Activated CD4-positive, alpha-beta T cell treated with anti-CD3 and anti-CD28 coated beads for 36 hours (primary cell): ENCODE measurements at regions of chr5 and their contacts with region 1.

Region 1: GRCh38 chr5:176447982-176448608 is at the start of gene FAF2:
- DNase-seq: peak; percentile 98
- ATAC-seq: peak; percentile 98
- H3K4me3 Mint-ChIP-seq: peak within 1 kb of the TSS; percentile 90
- H3K27ac Mint-ChIP-seq: peak within 1 kb of the TSS; percentile 97
- H3K4me1 Mint-ChIP-seq: peaks cover 31% of the 10 kb centered on the region
- H3K27me3 Mint-ChIP-seq: no peaks in the 10 kb centered on the region
- total RNA-seq, gene FAF2: 37.6 to 44.8 TPM

Region 2: GRCh38 chr5:176361437-176362232 is 86.5 kb before region 1 on chr5 and contains the start of gene KIAA1191:
- CTCF ChIA-PET with region 1: interaction called, 3 read pairs
- POLR2A ChIA-PET with region 1: no interaction called
- intact Hi-C with region 1: loop called (anchors 1 kb)
- DNase-seq: peak; percentile 97
- ATAC-seq: peak; percentile 91
- H3K4me3 Mint-ChIP-seq: peak within 1 kb of the TSS; percentile 95
- H3K27ac Mint-ChIP-seq: peak within 1 kb of the TSS; percentile 94
- H3K4me1 Mint-ChIP-seq: peaks cover 32% of the 10 kb centered on the region
- H3K27me3 Mint-ChIP-seq: no peaks in the 10 kb centered on the region
- total RNA-seq, gene KIAA1191: 42.2 to 52.6 TPM

Region 3: DNA sequence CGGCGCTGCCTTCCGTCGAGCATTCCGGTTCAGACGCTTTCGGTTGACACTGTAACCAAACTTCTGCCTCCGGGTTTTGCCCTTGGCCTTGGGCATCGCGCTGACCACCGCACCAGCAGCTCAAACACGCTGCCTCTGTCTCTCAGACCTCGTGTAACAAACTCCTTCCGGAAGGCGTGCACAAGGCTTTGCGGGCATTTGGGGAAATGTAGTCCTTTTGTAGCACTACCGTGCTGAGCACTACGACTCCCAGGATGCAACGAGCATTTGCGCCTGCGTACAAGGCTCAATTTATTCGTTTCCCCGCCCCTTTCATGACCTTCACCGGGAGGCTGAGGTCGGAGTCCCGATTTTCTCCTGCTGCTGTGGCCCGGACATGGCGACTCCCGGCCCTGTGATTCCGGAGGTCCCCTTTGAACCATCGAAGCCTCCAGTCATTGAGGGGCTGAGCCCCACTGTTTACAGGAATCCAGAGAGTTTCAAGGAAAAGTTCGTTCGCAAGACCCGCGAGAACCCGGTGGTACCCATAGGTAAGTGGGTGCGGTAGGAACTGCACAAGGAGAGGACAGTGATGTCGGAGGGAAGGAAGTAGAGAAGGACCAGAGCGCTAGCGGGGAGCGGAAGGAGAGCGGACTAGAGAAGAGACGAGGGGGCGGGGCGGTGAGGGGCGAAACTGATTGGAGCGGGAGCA is 59.5 kb before region 1 on chr5 and contains the starts of genes HIGD2A and NOP16:
- CTCF ChIA-PET with region 1: interaction called, 3 read pairs
- POLR2A ChIA-PET with region 1: interaction called, 3 read pairs
- intact Hi-C with region 1: loop called (anchors 1 kb)
- DNase-seq: peak; percentile 100
- ATAC-seq: peak; percentile 93
- H3K4me3 Mint-ChIP-seq: peak within 1 kb of the TSS; percentile 95
- H3K27ac Mint-ChIP-seq: peak within 1 kb of the TSS; percentile 100
- H3K4me1 Mint-ChIP-seq: peaks cover 31% of the 10 kb centered on the region
- H3K27me3 Mint-ChIP-seq: no peaks in the 10 kb centered on the region
- total RNA-seq, gene HIGD2A: 104 to 140 TPM
- total RNA-seq, gene NOP16: 54.3 to 65.4 TPM

Region 4: GRCh38 chr5:176596689-176597416 is 148.8 kb after region 1 on chr5:
- CTCF ChIA-PET with region 1: no interaction called
- POLR2A ChIA-PET with region 1: no interaction called
- intact Hi-C with region 1: loop called in 1 of 2 experiments (anchors 1 kb)
- DNase-seq: peak; percentile 81
- ATAC-seq: peak; percentile 87
- H3K4me3 Mint-ChIP-seq: peak overlapping the region; percentile 48
- H3K27ac Mint-ChIP-seq: peak overlapping the region; percentile 68
- H3K4me1 Mint-ChIP-seq: peaks cover 8% of the 10 kb centered on the region
- H3K27me3 Mint-ChIP-seq: peaks cover 2% of the 10 kb centered on the region